ENCODE measurements at regions of chr1 and their contacts with region 1.

Region 1: GRCh38 chr1:53182111-53182593 is 14.5 kb upstream of the CPT2 start:
- H3K4me3 ChIP-seq: no peak overlapping the region
- H3K27ac ChIP-seq: no peak overlapping the region
- H3K4me1 ChIP-seq: no peaks in the 10 kb centered on the region
- CTCF ChIP-seq: no peak

Region 2: GRCh38 chr1:52904927-52905698 is 277.0 kb before region 1 on chr1:
- CTCF ChIA-PET with region 1: interaction called, 20 read pairs
- POLR2A ChIA-PET with region 1: interaction called, 5 read pairs
- H3K4me3 ChIP-seq: no peak overlapping the region
- H3K27ac ChIP-seq: no peak overlapping the region
- H3K4me1 ChIP-seq: no peaks in the 10 kb centered on the region
- CTCF ChIP-seq: peak; percentile 67; the same call in 1 of the 2 replicates

Region 3: GRCh38 chr1:53196485-53197270 is 14.5 kb after region 1 on chr1 and contains the start of gene CPT2:
- CTCF ChIA-PET with region 1: interaction called, 19 read pairs
- POLR2A ChIA-PET with region 1: no interaction called
- H3K4me3 ChIP-seq: peak within 1 kb of the TSS; percentile 83
- H3K27ac ChIP-seq: peak within 1 kb of the TSS; percentile 74; the same call in 1 of the 2 replicates
- H3K4me1 ChIP-seq: peaks cover 4% of the 10 kb centered on the region; the same call in 1 of the 2 replicates
- CTCF ChIP-seq: no peak

Region 4: DNA sequence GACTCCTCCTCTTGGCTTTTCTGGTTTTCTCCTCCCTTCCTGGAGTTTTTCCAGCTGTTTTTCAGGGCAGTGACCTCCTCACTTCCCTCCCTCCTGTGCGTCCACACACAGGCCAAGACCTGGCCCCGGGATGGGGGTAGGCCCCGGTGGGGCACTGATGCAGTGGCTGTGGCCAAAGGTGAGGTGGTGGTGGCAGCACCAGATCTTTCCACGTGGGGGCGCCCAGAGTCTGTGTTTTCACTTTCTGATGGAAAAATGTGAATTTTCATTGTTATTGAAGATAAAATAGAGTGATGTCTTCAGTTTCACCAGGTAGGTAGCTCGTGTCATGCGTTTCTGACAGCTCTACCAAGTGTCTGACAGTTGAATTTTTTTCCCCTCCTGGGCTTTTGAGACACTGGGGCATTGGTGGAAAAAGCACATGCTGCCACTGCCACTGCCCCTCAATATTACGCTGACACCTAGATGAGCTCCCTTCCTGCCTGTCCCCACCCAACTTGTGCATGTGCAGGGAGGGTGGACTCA is 96.1 kb after region 1 on chr1:
- CTCF ChIA-PET with region 1: no interaction called
- POLR2A ChIA-PET with region 1: no interaction called
- H3K4me3 ChIP-seq: no peak overlapping the region
- H3K27ac ChIP-seq: no peak overlapping the region
- H3K4me1 ChIP-seq: no peaks in the 10 kb centered on the region
- CTCF ChIP-seq: peak; percentile 54

Measured in HEK293 (cell line).